Activated naive CD4-positive, alpha-beta T cell treated with anti-CD3 and anti-CD28 coated beads for 36 hours (primary cell): ENCODE measurements at regions of chr11 and their contacts with region 1.

Region 1: DNA sequence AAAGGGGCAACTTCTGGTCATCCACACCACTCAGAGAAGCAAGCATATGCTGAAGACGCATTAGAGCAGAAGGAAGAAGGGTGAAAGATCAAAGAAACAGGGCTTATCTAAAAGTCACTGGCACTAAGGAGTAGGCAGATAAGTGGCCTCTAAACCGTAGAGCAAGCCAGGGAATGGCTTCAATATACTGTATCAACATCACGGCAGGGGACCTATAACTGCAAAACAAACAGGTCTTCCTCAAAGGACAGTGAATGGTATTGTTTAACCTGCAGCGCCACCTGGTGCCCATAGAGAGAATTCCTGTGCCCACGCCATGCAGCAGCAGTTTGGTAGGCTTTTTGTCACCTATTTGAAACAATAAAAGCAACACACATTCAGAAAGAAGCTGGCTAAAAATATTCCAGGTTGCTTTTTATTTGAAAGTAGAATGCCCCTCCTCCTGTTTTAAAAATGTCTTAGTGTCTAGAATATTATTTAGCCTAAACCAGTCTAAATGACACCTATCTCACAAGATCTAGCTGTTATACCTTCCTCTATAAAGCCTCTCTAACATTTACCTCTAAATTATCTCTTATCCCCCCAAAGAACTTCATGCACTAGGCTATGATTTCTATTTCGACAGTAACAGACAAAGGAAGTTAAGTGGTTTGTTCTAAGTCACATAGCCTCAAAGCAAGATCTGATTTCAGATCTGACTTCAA is 21.8 kb downstream of the SNX19 start:
- DNase-seq: peak; percentile 80
- H3K4me3 Mint-ChIP-seq: no peak overlapping the region
- H3K27ac Mint-ChIP-seq: no peak overlapping the region
- H3K4me1 Mint-ChIP-seq: no peaks in the 10 kb centered on the region
- H3K27me3 Mint-ChIP-seq: no peaks in the 10 kb centered on the region

Region 2: DNA sequence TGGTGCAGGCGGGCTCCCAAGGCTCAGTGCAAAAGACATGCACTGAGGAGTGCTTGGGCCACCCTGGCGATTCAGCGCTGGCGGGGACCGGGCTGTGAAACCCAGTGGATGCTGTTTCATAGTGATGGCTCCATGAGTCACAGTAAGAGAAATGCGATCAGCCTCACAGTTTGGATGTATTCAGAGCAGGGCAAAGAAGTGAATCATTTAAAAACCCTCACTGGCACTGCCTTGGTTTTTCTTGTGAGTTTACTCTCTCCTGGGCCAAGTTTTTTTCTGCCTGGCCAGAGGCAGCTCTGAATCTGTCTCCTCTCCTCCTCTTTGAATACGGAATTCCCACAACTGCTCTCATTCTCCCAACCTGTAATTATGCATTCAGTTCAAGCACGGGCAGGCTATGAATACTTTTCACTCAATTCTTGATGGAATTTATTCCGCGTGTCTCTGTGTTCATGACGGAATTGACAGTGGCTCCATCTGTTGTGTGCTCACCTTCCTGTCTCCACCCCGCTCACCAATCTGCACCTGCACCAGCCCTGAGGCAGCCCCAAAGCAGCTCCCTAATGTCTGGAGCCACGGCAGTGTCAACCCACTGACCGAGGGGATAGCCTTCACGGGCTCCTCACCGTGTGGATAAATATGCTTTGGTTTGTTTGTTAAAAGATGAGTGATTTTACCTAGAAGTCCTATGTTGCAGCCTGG is 480.9 kb before region 1 on chr11:
- CTCF ChIA-PET with region 1: no interaction called
- intact Hi-C with region 1: no loop called
- DNase-seq: no peak
- H3K4me3 Mint-ChIP-seq: no peak overlapping the region
- H3K27ac Mint-ChIP-seq: no peak overlapping the region
- H3K4me1 Mint-ChIP-seq: peaks cover 2% of the 10 kb centered on the region
- H3K27me3 Mint-ChIP-seq: no peaks in the 10 kb centered on the region

Region 3: DNA sequence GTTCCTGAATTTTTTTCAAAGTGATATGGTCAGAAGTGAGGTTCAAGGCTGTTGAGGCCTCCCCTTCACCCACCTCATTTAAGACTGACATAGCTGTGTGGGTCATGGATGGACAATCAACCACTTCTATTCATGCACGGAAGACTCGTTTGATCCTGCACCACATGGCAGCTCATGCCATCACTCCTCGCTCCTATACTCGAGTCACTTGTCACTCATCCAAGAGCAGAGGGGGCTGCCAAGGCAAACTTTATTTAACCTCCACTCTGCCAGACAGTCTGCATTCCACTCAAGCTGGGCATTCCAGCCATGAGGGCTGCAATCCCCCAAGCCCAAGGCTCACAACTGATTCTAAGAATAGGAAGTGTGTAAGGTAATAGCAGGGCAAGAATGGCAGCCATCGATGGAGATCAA is 12.3 kb before region 1 on chr11:
- CTCF ChIA-PET with region 1: interaction called, 10 read pairs
- intact Hi-C with region 1: no loop called
- DNase-seq: no peak
- H3K4me3 Mint-ChIP-seq: no peak overlapping the region
- H3K27ac Mint-ChIP-seq: peak overlapping the region; percentile 19
- H3K4me1 Mint-ChIP-seq: peaks cover 14% of the 10 kb centered on the region
- H3K27me3 Mint-ChIP-seq: no peaks in the 10 kb centered on the region

Region 4: DNA sequence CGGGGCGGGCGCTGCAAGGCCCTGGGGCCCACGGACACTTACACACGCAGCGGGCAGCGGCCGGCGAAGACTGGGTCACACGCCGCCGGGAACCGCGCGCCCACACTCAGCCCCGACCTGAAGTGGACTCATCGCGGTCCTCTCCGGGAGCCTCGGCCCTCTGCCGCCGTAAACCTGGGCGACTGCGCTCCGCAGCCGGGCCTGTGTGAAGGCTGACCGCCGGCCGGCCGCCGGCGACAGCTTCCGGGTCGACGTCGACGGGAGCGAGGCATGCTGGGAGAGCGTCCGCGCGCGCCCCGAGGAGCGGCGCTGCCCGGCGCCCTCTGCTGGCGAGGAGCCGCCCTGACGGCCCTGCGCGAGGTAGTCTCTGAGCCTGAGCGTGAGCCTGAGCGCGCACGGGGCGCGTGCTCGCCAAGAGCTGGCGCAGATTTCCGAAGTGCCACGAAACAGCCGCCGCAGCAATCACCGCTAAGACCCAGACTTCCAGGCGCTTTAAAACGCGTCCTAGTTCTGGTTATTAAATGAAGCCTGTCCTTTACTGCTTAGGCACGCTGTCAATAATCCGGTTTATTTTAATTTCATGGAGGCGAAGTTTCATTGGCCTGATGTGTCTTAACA is 21.9 kb after region 1 on chr11 and contains the start of gene SNX19:
- CTCF ChIA-PET with region 1: interaction called, 12 read pairs
- intact Hi-C with region 1: no loop called
- DNase-seq: peak; percentile 90
- H3K4me3 Mint-ChIP-seq: peak within 1 kb of the TSS; percentile 78
- H3K27ac Mint-ChIP-seq: peak within 1 kb of the TSS; percentile 57
- H3K4me1 Mint-ChIP-seq: peaks cover 32% of the 10 kb centered on the region
- H3K27me3 Mint-ChIP-seq: no peaks in the 10 kb centered on the region
- total RNA-seq, gene SNX19: 18.0 to 21.6 TPM